AG04449 (cell line): ENCODE measurements at regions of chr6 and their contacts with region 1.

Region 1: GRCh38 chr6:26520853-26521599 is 17.1 kb upstream of the HMGN4 start:
- DNase-seq: no peak
- H3K4me3 ChIP-seq: peak overlapping the region; percentile 61
- CTCF ChIP-seq: no peak

Region 2: GRCh38 chr6:26473758-26474438 is 47.1 kb before region 1 on chr6:
- CTCF ChIA-PET with region 1: no interaction called
- POLR2A ChIA-PET with region 1: no interaction called
- DNase-seq: peak; percentile 84
- H3K4me3 ChIP-seq: peak overlapping the region; percentile 53
- CTCF ChIP-seq: no peak

Region 3: DNA sequence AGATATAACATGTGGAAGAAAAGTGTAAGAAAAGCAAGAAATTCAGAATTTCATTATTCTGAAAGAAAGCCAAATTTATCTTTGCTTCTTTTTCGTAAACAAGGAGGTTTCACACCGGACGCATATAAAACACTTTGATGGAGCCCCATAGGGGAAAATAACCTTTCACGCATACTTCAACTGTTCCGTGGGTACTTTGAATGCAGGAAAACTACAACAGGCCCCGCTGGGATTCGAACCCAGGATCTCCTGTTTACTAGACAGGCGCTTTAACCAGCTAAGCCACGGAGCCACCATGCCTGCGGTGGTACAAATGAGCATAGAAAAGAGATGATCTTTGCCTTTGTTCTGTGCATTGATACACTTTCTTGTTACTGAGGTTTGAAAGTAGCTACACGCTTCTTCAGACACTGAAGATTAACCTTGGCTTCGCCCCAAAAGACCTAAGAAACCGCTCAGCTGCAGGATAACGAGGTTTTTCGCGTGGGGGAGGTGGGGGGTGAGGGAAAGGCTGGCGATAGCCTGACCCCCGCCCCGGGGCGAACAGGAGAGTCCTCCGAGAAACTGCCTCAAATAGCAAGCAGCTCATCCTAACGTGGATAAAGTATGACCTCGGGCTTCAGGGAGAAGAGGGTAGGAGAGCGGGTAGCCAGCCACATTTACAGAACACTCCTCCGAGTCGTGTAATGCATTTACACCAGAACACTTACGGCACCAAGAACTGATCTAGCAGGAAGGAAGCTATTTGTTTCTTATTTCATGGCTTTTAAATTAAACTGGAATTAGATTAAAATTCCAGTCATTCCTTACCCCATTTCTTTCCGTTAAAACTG is 11.9 kb after region 1 on chr6:
- CTCF ChIA-PET with region 1: interaction called, 20 read pairs
- POLR2A ChIA-PET with region 1: interaction called, 5 read pairs
- DNase-seq: no peak
- H3K4me3 ChIP-seq: peak overlapping the region; percentile 75
- CTCF ChIP-seq: no peak